ENCODE measurements at regions of chr9 and their contacts with region 1.

Region 1: GRCh38 chr9:106885451-106885850 is 22.5 kb downstream of the ZNF462 start:
- DNase-seq: peak; percentile 72 to 87
- ATAC-seq: peak; percentile 92 to 94
- H3K4me3 ChIP-seq: peak overlapping the region in 1 of 4 donors; percentile 19
- H3K27ac ChIP-seq: peak overlapping the region; percentile 83 to 88 (median 84)
- H3K4me1 ChIP-seq: peaks cover 47 to 54% of the 10 kb centered on the region in 2 donors
- H3K27me3 ChIP-seq: no peaks in the 10 kb centered on the region
- CTCF ChIP-seq: no peak
- POLR2A ChIP-seq: peak in 1 of 2 donors; percentile 36

Region 2: DNA sequence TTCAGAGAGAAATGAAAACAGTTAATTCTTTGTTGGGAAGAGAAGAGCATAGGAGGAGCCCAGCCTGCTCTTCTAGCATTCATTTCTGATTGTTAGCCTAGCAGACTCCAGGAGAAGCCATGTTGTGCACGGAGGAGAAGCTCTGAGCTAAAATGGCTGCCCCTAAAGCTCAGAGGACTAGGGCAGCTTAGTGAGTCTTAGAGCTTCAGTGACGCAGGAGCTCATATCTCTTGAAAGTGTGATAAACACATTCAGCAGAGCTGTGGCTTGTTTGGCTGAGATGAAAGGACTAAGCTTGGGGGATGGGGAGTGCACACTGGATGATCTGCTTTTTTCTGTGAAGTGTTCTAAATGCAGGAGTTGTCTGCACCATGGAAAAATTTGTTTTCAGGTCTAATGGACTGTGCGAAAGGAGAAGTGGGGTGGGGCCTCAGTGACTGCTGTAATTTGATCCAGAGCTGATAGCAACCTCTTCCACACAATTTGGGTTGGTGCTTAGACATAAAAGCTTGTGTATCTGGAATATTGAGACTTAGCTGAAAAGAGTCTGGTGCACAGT is 36.0 kb after region 1 on chr9:
- in situ Hi-C with region 1: no loop called
- intact Hi-C with region 1: loop called (anchors 2 kb)
- DNase-seq: peak; percentile 27 to 43
- ATAC-seq: peak; percentile 54 to 70
- H3K4me3 ChIP-seq: peak overlapping the region; percentile 11 to 30 (median 24)
- H3K27ac ChIP-seq: peak overlapping the region; percentile 82 to 90 (median 88)
- H3K4me1 ChIP-seq: peaks cover 49 to 61% of the 10 kb centered on the region in 2 donors
- H3K27me3 ChIP-seq: no peaks in the 10 kb centered on the region
- CTCF ChIP-seq: no peak
- POLR2A ChIP-seq: no peak